ENCODE measurements at regions of chr11 and their contacts with region 1.

Region 1: GRCh38 chr11:74702383-74703007 is 28.7 kb downstream of the CHRDL2 start:
- DNase-seq: peak; percentile 73
- H3K4me3 ChIP-seq: no peak overlapping the region
- H3K27ac ChIP-seq: no peak overlapping the region
- H3K4me1 ChIP-seq: peaks cover 2% of the 10 kb centered on the region
- H3K27me3 ChIP-seq: no peaks in the 10 kb centered on the region
- CTCF ChIP-seq: peak; percentile 92
- POLR2A ChIP-seq: no peak

Region 2: DNA sequence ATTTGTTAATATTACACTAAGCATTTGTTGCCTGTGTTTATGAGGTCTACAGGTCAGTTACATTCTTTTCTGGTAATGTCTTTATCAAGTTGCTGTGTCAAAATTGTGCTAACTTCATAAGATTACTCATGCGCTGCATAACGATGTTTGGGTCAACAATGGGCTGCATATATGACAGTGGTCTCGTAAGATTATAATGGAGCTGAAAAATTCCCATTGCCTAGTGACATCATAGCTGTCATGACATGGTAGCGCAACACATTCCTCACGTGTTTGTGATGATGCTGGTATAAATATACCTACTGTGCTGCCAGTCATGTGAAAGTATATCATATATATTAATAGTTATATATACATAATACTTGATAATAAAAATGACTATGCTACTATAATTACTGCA is 75.9 kb before region 1 on chr11:
- CTCF ChIA-PET with region 1: interaction called, 13 read pairs
- POLR2A ChIA-PET with region 1: no interaction called
- dilution Hi-C with region 1: no loop called
- intact Hi-C with region 1: no loop called
- DNase-seq: no peak
- H3K4me3 ChIP-seq: no peak overlapping the region
- H3K27ac ChIP-seq: no peak overlapping the region
- H3K4me1 ChIP-seq: no peaks in the 10 kb centered on the region
- H3K27me3 ChIP-seq: no peaks in the 10 kb centered on the region
- CTCF ChIP-seq: no peak
- POLR2A ChIP-seq: no peak

Region 3: DNA sequence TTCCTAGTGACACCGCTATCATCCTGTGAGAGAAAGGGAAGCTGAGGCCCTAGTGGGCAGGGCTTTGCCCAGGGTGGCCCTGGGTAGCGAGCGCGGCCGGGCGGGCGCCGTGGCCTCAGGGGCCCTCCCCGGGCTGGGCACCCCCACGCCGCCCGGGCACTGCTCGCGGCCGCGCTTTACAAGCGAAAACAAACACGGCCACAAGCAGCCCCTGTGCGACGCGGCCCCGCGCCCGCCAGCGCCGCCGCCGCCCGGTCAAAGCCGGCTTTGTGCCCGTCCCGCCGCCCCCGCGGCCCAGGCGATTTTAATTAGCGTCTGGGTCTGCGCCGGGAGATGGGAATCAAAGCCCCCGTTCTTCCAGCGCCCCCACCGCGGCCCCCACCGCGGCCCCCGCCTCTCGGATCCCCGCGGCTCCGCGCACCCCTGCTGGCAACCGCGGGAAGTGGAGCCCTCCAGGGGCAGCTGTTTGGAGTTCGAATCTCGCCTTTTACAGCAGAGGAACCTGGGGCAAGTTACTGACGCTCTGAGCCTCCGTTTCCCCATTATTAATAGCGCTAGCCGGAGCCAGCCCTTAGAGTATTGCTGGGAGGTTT is 19.1 kb before region 1 on chr11:
- CTCF ChIA-PET with region 1: interaction called, 84 read pairs
- POLR2A ChIA-PET with region 1: no interaction called
- dilution Hi-C with region 1: no loop called
- intact Hi-C with region 1: no loop called
- DNase-seq: peak; percentile 41
- H3K4me3 ChIP-seq: peak overlapping the region; percentile 27 to 31 (median 29)
- H3K27ac ChIP-seq: no peak overlapping the region
- H3K4me1 ChIP-seq: peaks cover 4% of the 10 kb centered on the region
- H3K27me3 ChIP-seq: no peaks in the 10 kb centered on the region
- CTCF ChIP-seq: peak; percentile 38 to 70
- POLR2A ChIP-seq: no peak

Region 4: DNA sequence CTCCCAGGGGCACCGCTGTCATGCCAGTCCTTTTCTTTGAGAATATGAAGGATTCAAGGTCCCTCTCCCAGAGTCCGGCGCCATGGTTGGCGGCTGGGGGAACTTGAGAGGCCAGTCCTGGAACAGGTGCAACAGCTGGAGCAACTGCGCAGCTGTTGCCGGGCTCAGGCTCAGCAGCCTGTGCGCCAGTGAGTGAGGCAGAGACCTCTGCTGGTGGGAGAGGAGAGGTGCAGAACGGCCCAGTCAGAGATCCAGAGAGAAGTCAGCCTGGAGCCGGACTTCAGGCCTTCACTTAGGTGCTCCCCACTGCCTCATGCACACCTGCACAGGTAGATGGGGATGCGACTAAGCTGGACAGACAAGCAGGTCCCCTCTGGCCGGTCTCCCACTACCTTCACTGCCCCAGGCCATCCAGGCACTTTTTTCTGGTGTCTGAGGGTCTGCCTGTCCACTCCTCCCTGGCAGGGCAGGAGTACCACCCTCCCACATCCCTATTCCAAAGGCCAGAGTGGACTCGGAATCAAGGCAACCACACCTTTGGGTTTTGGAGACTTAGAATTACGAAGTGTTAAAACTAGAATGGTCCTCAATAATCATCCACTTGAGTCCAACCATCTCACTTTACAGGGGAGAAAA is 24.2 kb after region 1 on chr11:
- CTCF ChIA-PET with region 1: interaction called, 191 read pairs
- POLR2A ChIA-PET with region 1: no interaction called
- dilution Hi-C with region 1: no loop called
- intact Hi-C with region 1: loop called (anchors 2 kb)
- DNase-seq: peak; percentile 60
- H3K4me3 ChIP-seq: no peak overlapping the region
- H3K27ac ChIP-seq: no peak overlapping the region
- H3K4me1 ChIP-seq: no peaks in the 10 kb centered on the region
- H3K27me3 ChIP-seq: peaks cover 61 to 66% of the 10 kb centered on the region in 2 experiments
- CTCF ChIP-seq: peak; percentile 80 to 97
- POLR2A ChIP-seq: no peak

Region 5: DNA sequence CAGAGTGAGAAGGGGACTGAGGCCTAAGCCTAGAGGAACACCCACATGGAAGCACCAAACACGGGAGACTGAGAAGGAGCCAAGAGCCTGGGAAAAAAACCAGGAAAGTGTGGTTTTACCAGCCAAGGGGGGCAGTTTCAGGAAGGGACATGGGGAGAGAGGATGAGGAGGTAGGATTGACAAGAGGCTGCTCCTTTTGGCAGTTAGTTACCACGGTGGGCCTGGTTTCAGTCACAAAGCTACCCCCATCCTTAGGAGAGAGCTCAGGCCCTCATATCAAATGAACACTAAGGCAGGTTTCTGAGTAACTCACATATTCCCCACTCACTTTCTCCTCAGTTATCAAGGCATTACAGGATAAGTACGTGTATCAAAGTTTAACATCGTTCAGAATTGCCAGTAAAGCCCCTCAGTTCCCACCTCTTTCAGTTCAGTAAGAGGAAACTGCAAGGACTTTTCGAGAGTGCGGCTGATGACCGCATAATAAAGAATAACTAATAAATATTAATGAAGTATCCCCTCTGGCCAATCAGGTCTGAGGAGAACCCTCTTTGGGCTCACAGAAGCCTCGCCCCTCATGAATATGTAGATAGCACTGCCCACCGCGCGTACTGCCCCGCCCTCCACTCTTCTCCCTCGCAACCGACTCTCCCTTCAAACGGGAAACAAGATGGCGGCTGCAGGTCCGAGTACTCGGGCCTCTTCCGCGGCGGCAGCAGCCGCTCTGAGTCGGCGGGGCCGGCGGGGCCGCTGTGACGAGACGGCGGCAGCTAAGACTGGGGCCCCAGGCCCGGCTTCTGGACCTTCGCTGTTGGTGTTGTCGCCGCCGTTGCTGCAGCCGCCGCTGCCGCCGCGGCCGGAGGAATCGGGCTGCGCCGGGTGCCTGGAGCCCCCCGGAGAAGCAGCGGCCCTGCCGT is 46.0 kb after region 1 on chr11 and contains the start of gene RNF169:
- CTCF ChIA-PET with region 1: interaction called, 13 read pairs
- POLR2A ChIA-PET with region 1: no interaction called
- dilution Hi-C with region 1: no loop called
- intact Hi-C with region 1: no loop called
- DNase-seq: peak; percentile 98
- H3K4me3 ChIP-seq: peak within 1 kb of the TSS; percentile 49 to 84 (median 70)
- H3K27ac ChIP-seq: peak within 1 kb of the TSS; percentile 88
- H3K4me1 ChIP-seq: peaks cover 22% of the 10 kb centered on the region
- H3K27me3 ChIP-seq: peaks cover 0 to 2% of the 10 kb centered on the region in 2 experiments
- CTCF ChIP-seq: no peak
- POLR2A ChIP-seq: peak; percentile 90
- total RNA-seq, gene RNF169: 17.3 and 21.3 TPM in 2 replicates

Region 6: DNA sequence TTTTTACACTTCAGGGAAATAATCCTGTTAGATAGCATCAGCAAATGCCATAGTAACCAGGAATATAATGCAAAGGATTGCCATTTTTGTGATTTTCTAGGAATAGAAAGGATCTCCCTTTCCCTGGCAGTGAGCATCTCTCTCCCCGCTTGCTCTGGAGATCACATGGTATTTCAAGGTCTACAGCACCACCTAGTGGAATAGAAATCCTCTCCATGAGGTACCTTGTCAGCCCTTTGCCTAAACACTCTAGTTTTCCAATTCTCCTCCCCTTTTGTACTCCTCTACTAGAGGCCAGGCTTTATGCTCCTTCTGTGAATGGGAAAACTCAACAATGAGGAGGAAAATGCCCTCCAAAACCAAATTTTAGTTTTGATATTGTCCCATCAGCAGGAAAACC is 168.0 kb after region 1 on chr11:
- CTCF ChIA-PET with region 1: interaction called, 140 read pairs
- POLR2A ChIA-PET with region 1: no interaction called
- dilution Hi-C with region 1: loop called (anchors 25 kb)
- intact Hi-C with region 1: loop called (anchors 1 kb)
- DNase-seq: peak; percentile 49
- H3K4me3 ChIP-seq: no peak overlapping the region
- H3K27ac ChIP-seq: no peak overlapping the region
- H3K4me1 ChIP-seq: no peaks in the 10 kb centered on the region
- H3K27me3 ChIP-seq: no peaks in the 10 kb centered on the region
- CTCF ChIP-seq: peak; percentile 39 to 45
- POLR2A ChIP-seq: no peak

Region 7: GRCh38 chr11:75429902-75430719 is 727.6 kb after region 1 on chr11:
- CTCF ChIA-PET with region 1: no interaction called
- POLR2A ChIA-PET with region 1: no interaction called
- dilution Hi-C with region 1: no loop called
- intact Hi-C with region 1: no loop called
- DNase-seq: peak; percentile 64
- H3K4me3 ChIP-seq: peak overlapping the region in 1 of 3 experiments; percentile 4
- H3K27ac ChIP-seq: no peak overlapping the region
- H3K4me1 ChIP-seq: peaks cover 9% of the 10 kb centered on the region
- H3K27me3 ChIP-seq: peaks cover 26 to 29% of the 10 kb centered on the region in 2 experiments
- CTCF ChIP-seq: no peak
- POLR2A ChIP-seq: no peak

Measured in endothelial cell of umbilical vein (primary cell).